ENCODE measurements at regions of chr3 and their contacts with region 1.

Region 1: GRCh38 chr3:85576091-85576690 is 617.4 kb downstream of the CADM2 start:
- DNase-seq: no peak
- H3K4me3 ChIP-seq: no peak overlapping the region
- H3K27ac ChIP-seq: no peak overlapping the region
- H3K4me1 ChIP-seq: no peaks in the 10 kb centered on the region
- H3K27me3 ChIP-seq: no peaks in the 10 kb centered on the region
- CTCF ChIP-seq: peak in 5 of 6 experiments; percentile 59 to 81 (median 65)
- POLR2A ChIP-seq: no peak

Region 2: DNA sequence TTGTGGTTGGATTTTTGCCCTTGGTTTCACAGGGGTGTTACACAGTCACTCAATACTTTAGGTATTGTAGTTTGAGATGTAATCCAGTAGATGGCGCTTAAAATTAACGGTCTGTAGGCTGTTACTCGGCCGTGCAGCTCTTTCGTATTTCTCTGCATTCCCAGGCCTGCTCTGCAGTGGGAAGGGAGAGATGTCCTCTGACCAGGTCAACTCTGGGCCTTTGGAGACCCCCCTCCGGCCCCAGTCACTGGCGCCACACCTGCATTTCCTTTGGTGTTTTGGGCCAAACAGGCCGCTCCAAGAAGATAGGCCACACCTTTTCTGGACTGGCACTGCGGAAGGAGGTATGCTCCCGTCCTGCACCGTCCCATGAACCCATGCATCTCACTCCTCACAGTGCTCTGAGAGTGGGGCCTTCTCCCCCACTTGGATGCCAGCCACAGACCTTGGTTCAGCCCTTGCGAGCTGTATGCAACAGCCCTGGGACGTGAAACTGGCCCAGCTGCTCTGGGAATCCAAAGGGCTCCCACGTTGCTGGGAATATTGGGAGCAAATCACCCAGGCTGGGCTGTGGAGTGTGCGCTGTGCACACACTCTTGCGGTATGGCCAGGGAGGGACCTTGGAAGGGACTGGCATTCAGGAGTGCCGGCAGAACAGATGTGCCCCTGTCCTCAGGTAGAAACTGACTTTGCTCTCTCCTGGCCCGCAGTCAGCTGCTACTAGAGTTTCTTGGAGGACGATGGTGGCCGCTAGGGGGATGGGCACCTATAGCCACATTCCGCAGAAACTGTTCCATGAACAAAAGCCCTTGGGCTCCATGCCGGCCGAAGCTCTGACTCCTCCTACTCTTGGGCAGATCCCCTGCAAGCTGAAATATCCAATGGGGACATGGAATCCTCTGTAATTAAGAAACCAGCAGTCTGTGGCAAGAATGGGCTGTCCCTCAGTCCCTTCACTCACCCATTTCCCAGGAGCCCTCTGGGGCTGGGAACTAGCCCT is 1027.9 kb before region 1 on chr3:
- intact Hi-C with region 1: loop called (anchors 10 kb)
- DNase-seq: no peak
- H3K4me3 ChIP-seq: peak overlapping the region in 1 of 4 donors; percentile 16
- H3K27ac ChIP-seq: no peak overlapping the region
- H3K4me1 ChIP-seq: no peaks in the 10 kb centered on the region
- H3K27me3 ChIP-seq: no peaks in the 10 kb centered on the region
- CTCF ChIP-seq: peak in 4 of 6 experiments; percentile 24 to 45 (median 26)
- POLR2A ChIP-seq: no peak

Region 3: DNA sequence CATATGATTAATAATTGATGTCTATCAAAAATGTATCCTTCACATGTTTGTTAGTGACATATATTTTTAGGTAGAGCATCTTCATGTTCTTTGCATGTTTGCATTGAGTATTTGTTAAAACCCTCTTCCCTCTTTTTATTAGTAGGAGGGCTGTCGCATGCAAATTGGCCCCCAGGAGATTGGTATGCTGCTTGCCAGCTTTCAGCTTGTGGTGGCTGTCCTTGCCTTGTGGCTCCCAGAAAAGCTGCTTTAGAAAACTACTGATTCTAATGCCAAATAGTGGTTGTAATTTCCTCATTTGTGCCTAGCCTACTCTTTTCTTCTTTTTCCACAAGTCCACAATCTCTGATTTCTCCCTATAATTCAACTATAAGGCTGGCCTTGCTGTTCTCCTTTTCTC is 528.0 kb after region 1 on chr3:
- intact Hi-C with region 1: no loop called
- DNase-seq: no peak
- H3K4me3 ChIP-seq: no peak overlapping the region
- H3K27ac ChIP-seq: no peak overlapping the region
- H3K4me1 ChIP-seq: no peaks in the 10 kb centered on the region
- H3K27me3 ChIP-seq: no peaks in the 10 kb centered on the region
- CTCF ChIP-seq: no peak
- POLR2A ChIP-seq: no peak

Measured in esophagus squamous epithelium (tissue), 5 donors.